Transverse colon (tissue), 4 donors: ENCODE measurements at regions of chr10 and their contacts with region 1.

Region 1: DNA sequence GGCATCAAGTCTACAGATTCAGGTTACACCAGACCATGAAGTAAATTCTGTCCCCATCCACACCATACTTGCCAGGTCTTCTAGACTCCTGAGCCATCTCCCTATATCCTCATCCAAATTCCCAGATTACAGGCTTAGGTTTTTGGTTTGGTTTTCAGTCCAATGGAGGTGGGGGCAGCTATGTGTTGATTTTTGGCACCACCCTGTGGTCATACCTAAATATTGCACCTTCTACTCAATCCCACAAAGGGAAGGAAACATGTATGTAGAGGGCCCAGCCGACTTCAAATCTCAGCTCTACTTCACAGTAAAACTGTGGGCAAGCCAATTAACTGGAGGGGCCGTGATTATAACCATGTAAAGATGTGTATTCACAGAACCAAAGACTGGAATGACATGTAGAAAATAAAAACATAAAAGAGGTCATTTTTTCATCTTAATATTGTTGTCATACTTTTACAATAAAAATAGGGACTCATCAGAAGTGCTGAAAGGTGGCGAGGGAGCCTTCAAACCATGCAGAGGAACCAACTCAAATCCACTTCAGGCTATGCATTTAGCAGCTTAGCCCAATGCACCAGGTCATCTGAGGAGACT is 19.8 kb downstream of the ERCC6 start:
- DNase-seq: no peak
- H3K4me3 ChIP-seq: no peak overlapping the region
- H3K27ac ChIP-seq: no peak overlapping the region
- H3K4me1 ChIP-seq: no peaks in the 10 kb centered on the region
- H3K27me3 ChIP-seq: no peaks in the 10 kb centered on the region
- CTCF ChIP-seq: peak; percentile 53 to 62 (median 59)
- EP300 ChIP-seq: no peak
- POLR2A ChIP-seq: no peak

Region 2: GRCh38 chr10:48981310-48981907 is 537.7 kb before region 1 on chr10:
- in situ Hi-C with region 1: loop called (anchors 25 kb)
- intact Hi-C with region 1: no loop called
- DNase-seq: peak; percentile 51
- H3K4me3 ChIP-seq: no peak overlapping the region
- H3K27ac ChIP-seq: no peak overlapping the region
- H3K4me1 ChIP-seq: no peaks in the 10 kb centered on the region
- H3K27me3 ChIP-seq: no peaks in the 10 kb centered on the region
- CTCF ChIP-seq: peak; percentile 57 to 77 (median 69)
- EP300 ChIP-seq: no peak
- POLR2A ChIP-seq: no peak

Region 3: GRCh38 chr10:49407552-49408137 is 111.4 kb before region 1 on chr10:
- in situ Hi-C with region 1: loop called in 3 of 4 experiments (anchors 10 kb)
- intact Hi-C with region 1: loop called (anchors 5 kb)
- DNase-seq: peak; percentile 75
- H3K4me3 ChIP-seq: no peak overlapping the region
- H3K27ac ChIP-seq: no peak overlapping the region
- H3K4me1 ChIP-seq: no peaks in the 10 kb centered on the region
- H3K27me3 ChIP-seq: peaks cover 27% of the 10 kb centered on the region
- CTCF ChIP-seq: peak; percentile 73 to 86 (median 84)
- EP300 ChIP-seq: no peak
- POLR2A ChIP-seq: no peak

Region 4: DNA sequence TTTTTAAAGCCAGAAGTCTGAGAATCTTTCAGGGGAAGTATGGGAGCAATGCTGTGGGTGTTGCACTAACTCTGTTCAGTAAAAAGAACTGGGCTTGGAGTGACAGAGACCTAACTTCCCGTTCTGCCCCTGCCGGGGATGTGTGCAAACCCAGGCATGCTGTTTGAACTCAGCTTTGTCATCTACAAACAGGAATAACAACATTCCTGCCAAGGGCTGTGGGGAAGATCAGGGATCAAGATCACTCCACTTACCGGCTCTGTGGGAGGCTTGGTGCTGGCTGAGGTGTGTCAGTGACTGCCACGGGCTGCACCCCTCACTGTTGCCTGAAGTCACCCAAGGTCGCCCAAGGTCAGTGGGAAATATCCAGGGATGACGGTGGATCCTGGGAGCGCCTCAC is 100.1 kb before region 1 on chr10:
- in situ Hi-C with region 1: loop called in 3 of 4 experiments (anchors 10 kb)
- intact Hi-C with region 1: no loop called
- DNase-seq: no peak
- H3K4me3 ChIP-seq: no peak overlapping the region
- H3K27ac ChIP-seq: no peak overlapping the region
- H3K4me1 ChIP-seq: no peaks in the 10 kb centered on the region
- H3K27me3 ChIP-seq: no peaks in the 10 kb centered on the region
- CTCF ChIP-seq: no peak
- EP300 ChIP-seq: no peak
- POLR2A ChIP-seq: no peak

Region 5: DNA sequence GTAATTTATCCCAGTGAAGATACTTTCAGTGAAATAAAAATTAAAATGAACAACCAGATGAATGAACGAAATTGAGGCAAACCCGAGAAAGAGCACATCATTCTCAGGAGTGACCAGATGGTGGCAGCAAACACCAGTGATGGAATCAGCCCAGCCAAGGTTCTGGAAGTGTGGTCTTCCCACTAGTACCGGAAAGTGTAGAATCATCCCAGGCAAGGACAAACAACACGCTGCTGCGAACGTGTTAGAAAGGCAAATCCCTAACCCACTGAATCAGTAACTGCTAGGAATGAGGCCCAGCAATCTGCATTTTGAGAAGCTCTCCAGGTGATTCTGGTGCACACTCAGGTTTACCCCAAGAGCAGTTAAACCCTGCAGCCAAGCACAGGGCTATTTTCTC is 75.5 kb after region 1 on chr10:
- in situ Hi-C with region 1: no loop called
- intact Hi-C with region 1: no loop called
- DNase-seq: peak; percentile 24
- H3K4me3 ChIP-seq: no peak overlapping the region
- H3K27ac ChIP-seq: no peak overlapping the region
- H3K4me1 ChIP-seq: no peaks in the 10 kb centered on the region
- H3K27me3 ChIP-seq: peaks cover 5% of the 10 kb centered on the region
- CTCF ChIP-seq: peak; percentile 58 to 76 (median 64)
- EP300 ChIP-seq: no peak
- POLR2A ChIP-seq: no peak